Common myeloid progenitor, CD34-positive (primary cell): ENCODE measurements at regions of chr3 and their contacts with region 1.

Region 1: GRCh38 chr3:58041654-58042324 is 33.6 kb downstream of the FLNB start:
- DNase-seq: peak in 2 of 3 donors; percentile 86 to 90
- H3K4me3 ChIP-seq: peak overlapping the region in 1 of 7 experiments; percentile 37
- H3K27ac ChIP-seq: peak overlapping the region; percentile 17 to 18
- H3K4me1 ChIP-seq: peaks cover 5 to 67% (median 50%) of the 10 kb centered on the region in 4 experiments
- H3K27me3 ChIP-seq: no peaks in the 10 kb centered on the region

Region 2: DNA sequence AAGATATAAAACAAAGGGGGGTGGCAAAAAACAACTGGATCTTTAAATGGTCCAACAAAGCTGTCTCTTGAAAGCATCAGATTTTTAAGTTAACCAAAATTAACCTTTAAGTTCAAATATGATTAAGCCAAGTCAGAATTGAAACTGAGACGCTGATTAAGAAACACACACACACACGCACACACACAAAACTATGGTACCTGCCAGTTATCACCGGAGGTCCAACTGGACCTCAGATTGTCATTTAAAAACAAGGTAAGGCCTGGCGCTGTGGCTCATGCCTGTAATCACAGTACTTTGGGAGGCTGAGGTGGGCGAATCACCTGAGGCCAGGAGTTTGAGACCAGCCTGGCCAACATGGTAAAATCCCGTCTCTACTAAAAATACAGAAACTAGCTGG is 455.0 kb before region 1 on chr3:
- CTCF ChIA-PET with region 1: no interaction called
- POLR2A ChIA-PET with region 1: no interaction called
- DNase-seq: no peak
- H3K4me3 ChIP-seq: no peak overlapping the region
- H3K27ac ChIP-seq: no peak overlapping the region
- H3K4me1 ChIP-seq: peaks cover 0 to 3% (median 0%) of the 10 kb centered on the region in 4 experiments
- H3K27me3 ChIP-seq: no peaks in the 10 kb centered on the region

Region 3: GRCh38 chr3:57815036-57815435 is 226.8 kb before region 1 on chr3:
- CTCF ChIA-PET with region 1: no interaction called
- POLR2A ChIA-PET with region 1: no interaction called
- DNase-seq: no peak
- H3K4me3 ChIP-seq: no peak overlapping the region
- H3K27ac ChIP-seq: no peak overlapping the region
- H3K4me1 ChIP-seq: peaks cover 0 to 14% (median 5%) of the 10 kb centered on the region in 4 experiments
- H3K27me3 ChIP-seq: no peaks in the 10 kb centered on the region

Region 4: DNA sequence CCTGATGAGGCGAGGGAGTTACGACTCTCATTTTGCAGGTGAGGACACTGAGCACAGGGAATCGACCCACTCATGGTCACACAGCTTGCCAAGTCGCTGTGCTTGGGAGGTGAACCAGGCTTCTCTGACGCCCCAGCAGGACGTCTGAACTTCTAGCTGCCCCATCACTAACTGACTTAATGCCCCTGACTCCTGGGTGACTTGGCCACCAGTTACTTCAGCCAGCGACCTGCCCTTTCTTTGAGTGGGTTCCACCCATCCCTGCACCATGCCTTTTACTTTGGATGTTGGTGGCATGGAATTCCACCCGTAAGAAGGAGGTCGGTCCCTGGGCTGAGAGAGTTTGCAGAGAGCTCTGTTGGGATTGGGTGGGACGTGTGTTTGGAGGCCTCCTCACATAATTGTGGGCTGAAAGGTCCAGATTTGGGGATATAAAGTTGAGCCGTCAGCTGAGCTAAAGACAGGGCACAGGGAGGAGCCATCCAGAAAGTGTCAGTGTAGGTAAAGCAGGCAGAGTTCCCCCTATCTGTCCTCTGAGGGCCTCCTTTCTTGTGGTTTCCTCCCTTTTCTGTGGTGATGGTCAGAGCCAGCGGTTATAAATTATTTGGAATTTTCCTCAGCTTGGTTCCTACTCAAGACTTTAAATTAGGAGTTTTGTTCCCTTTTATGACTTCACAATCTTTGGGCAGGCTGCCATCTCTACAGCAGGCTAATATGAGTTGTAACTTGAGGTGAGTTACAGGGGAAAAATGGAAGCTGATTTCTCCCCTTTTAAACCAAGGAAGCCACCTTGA is 21.4 kb after region 1 on chr3:
- CTCF ChIA-PET with region 1: interaction called, 11 read pairs
- POLR2A ChIA-PET with region 1: no interaction called
- DNase-seq: peak in 2 of 3 donors; percentile 64 to 68
- H3K4me3 ChIP-seq: peak overlapping the region in 1 of 7 experiments; percentile 16
- H3K27ac ChIP-seq: no peak overlapping the region
- H3K4me1 ChIP-seq: peaks cover 4 to 33% (median 25%) of the 10 kb centered on the region in 4 experiments
- H3K27me3 ChIP-seq: no peaks in the 10 kb centered on the region

Region 5: DNA sequence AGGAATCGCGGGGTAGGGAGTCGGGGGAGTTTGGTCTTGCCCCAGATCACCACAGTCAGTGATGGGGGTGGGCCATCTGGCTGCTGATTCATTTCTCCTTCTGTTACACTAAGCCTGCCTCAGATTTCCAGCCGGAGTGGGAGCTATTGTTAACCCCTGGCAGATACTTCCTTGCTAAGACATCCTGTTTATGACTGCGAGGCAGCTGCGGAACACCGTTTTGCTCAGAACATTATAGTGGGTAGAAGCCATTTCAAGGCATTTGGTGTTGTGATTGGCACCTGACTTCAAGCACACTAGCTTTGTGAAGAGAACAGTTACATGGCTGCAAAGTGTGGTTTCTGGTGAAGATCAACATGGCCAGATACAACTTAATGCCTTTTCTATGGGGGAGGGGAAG is 40.3 kb after region 1 on chr3:
- CTCF ChIA-PET with region 1: interaction called, 11 read pairs
- POLR2A ChIA-PET with region 1: interaction called, 4 read pairs
- DNase-seq: peak; percentile 50 to 92 (median 90)
- H3K4me3 ChIP-seq: peak overlapping the region in 4 of 7 experiments; percentile 32 to 42 (median 39)
- H3K27ac ChIP-seq: peak overlapping the region in 1 of 2 experiments; percentile 56
- H3K4me1 ChIP-seq: peaks cover 21 to 67% (median 45%) of the 10 kb centered on the region in 4 experiments
- H3K27me3 ChIP-seq: no peaks in the 10 kb centered on the region